ENCODE measurements at regions of chr19 and their contacts with region 1.

Region 1: GRCh38 chr19:58154679-58155648 is 4.4 kb upstream of the ZNF329 start:
- DNase-seq: peak; percentile 97 to 99 (median 97)
- ATAC-seq: peak; percentile 93 to 98 (median 98)
- H3K4me3 ChIP-seq: peak overlapping the region; percentile 70 to 99 (median 90)
- H3K27ac ChIP-seq: peak overlapping the region; percentile 73 to 97 (median 93)
- H3K4me1 ChIP-seq: peaks cover 0 to 41% (median 22%) of the 10 kb centered on the region in 12 donors
- H3K27me3 ChIP-seq: no peaks in the 10 kb centered on the region
- CTCF ChIP-seq: peak; percentile 96 to 99 (median 99)
- POLR2A ChIP-seq: peak in 1 of 2 donors; percentile 82

Region 2: DNA sequence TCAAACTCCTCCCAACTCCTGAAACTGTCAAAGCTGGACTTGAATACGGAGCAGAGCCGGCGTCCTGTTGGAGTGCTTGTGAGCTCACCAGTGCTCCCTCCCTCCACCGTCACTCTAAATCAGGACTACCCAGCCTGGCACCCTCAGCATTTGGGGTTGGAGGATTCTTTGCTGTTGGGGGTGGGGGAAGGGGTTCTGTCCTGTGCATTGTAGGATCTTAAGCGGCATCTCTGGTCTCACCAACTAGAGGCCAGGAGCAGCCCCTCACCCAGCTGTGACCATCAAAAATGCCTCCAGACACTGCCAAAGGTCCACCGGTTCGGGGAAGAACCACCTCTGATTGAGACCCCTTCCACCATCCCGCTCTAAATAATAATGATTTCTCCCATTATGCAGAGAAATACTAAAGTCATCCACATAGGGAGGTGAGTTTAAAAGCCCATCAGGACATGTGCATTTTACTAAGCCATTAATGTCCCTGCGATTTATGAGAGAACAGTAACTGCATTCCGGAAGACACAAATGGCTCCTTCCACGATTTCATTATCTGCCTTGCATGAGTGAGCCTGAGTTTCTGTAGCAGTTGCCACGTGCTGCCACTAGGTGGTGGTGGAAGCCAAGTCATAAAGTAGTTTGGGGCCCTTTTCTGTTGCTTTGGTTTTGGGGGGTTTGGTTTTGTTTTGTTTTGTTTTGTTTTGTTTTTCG is 1051.2 kb before region 1 on chr19:
- intact Hi-C with region 1: loop called in 4 of 10 experiments (anchors 5 to 10 kb)
- DNase-seq: peak in 4 of 5 donors; percentile 43 to 58 (median 43)
- ATAC-seq: peak in 3 of 4 donors; percentile 59 to 79 (median 62)
- H3K4me3 ChIP-seq: peak overlapping the region in 7 of 12 donors; percentile 3 to 28 (median 22)
- H3K27ac ChIP-seq: no peak overlapping the region
- H3K4me1 ChIP-seq: peaks cover 0 to 12% (median 0%) of the 10 kb centered on the region in 12 donors
- H3K27me3 ChIP-seq: peaks cover 13 to 48% (median 19%) of the 10 kb centered on the region in 9 donors
- CTCF ChIP-seq: peak; percentile 62 to 92 (median 84)
- POLR2A ChIP-seq: no peak

Region 3: DNA sequence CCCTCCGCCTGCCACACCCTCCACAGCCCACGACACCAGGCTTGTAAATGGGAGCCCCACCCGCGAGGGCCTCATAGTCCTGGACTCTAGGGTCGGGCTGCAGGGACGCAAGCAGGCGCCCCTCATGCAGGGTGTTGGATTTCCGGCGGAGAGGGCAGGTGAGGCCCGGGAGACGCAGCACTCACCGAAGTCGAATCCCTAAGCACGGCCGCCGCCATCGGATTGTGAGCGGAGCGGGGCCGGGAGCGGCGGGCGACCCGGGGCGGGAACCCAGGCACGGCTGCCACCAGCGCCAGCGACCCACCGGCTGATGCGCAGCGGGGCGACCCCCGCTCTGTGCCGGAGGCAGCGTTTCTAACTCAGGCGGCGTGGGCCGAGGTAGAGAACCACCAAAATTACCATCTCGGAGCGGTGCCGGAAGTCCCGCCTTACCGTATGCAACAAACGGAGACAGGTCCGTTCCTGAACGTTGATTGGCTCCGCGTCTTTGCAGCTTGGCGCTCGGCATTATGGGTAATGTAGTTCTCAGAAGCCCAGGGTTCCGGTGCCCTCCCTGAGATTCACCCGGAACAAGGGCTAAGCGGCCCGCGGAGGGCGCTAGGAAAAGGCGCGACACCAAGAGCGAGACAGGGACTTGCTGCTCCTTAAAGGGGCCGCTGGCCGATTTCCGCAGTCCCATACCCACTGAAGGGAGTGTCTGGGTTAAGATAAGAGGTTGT is 576.3 kb before region 1 on chr19 and contains the start of gene ZNF416:
- intact Hi-C with region 1: loop called in 1 of 10 experiments (anchors 5 kb)
- DNase-seq: peak; percentile 97 to 99 (median 98)
- ATAC-seq: peak; percentile 95 to 99 (median 98)
- H3K4me3 ChIP-seq: peak within 1 kb of the TSS; percentile 68 to 100 (median 95)
- H3K27ac ChIP-seq: peak within 1 kb of the TSS in 11 of 12 donors; percentile 58 to 87 (median 78)
- H3K4me1 ChIP-seq: peaks cover 0 to 30% (median 18%) of the 10 kb centered on the region in 12 donors
- H3K27me3 ChIP-seq: no peaks in the 10 kb centered on the region
- CTCF ChIP-seq: peak in 7 of 12 donors; percentile 7 to 53 (median 28)
- POLR2A ChIP-seq: peak in 1 of 2 donors; percentile 38
- total RNA-seq, gene ZNF416: 3.3 to 7.3 (median 5.1) TPM

Region 4: GRCh38 chr19:57947208-57948134 is 207.5 kb before region 1 on chr19 and contains the start of gene ZNF256:
- intact Hi-C with region 1: loop called in 1 of 10 experiments (anchors 10 kb)
- DNase-seq: peak; percentile 96 to 98 (median 97)
- ATAC-seq: peak; percentile 99
- H3K4me3 ChIP-seq: peak within 1 kb of the TSS; percentile 70 to 100 (median 98)
- H3K27ac ChIP-seq: peak within 1 kb of the TSS; percentile 42 to 95 (median 90)
- H3K4me1 ChIP-seq: peaks cover 0 to 24% (median 12%) of the 10 kb centered on the region in 12 donors
- H3K27me3 ChIP-seq: no peaks in the 10 kb centered on the region
- CTCF ChIP-seq: peak; percentile 61 to 93 (median 77)
- POLR2A ChIP-seq: peak in 1 of 2 donors; percentile 56
- total RNA-seq, gene ZNF256: 5.1 to 13.4 (median 9.7) TPM

Region 5: DNA sequence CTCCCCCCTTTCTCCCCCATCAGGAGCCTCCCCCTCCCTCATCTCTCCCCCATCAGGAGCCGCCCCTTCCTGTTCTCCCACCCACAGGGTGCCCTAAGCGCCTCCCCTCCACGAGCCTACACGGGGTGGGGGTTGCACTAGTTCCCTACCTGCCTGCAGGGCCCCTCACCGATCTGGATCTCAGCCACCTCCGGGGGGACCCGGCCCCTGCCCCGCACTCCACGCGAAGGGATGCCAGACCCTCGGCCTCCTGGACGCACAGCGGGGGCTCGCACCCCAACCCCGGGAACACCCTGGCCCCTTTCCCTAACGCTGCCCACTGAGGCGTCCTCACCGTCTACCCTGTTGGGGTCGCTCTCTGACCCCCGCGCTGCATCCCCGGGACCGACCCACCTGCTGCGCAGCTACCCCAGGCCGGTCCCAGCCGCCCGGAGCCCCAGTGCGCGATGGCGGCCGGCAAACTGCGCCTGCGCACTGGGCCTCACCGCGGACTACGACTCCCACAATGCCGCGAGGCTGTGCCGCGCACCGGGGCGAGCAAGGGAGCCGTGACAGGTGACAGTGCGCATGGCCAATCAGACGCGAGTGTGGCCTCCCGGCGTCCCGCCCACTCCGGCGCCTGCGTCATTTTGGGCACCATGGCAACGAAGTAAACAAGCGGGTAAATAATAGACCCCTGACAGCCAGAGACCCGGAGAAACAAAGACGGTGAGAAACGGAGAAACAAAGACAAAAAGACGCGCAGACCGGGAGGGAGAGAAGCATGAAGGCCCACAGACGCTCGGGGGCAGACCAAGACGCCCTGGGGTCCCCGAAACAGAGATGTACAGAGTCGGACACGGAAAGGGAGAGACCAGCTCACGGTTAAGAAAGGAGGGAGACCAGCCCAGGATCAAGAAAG is 56.9 kb before region 1 on chr19 and contains the start of gene ZSCAN18:
- intact Hi-C with region 1: loop called in 2 of 10 experiments (anchors 1 to 5 kb)
- DNase-seq: peak; percentile 98 to 99 (median 99)
- ATAC-seq: peak; percentile 99 to 100 (median 100)
- H3K4me3 ChIP-seq: peak within 1 kb of the TSS; percentile 83 to 100 (median 98)
- H3K27ac ChIP-seq: peak within 1 kb of the TSS; percentile 52 to 98 (median 94)
- H3K4me1 ChIP-seq: peaks cover 0 to 24% (median 10%) of the 10 kb centered on the region in 12 donors
- H3K27me3 ChIP-seq: no peaks in the 10 kb centered on the region
- CTCF ChIP-seq: no peak
- POLR2A ChIP-seq: peak in 1 of 2 donors; percentile 86
- total RNA-seq, gene ZSCAN18: 45.1 to 114 (median 73.4) TPM

Measured in heart left ventricle (tissue), 16 donors.